ENCODE measurements at regions of chr5 and their contacts with region 1.

Region 1: DNA sequence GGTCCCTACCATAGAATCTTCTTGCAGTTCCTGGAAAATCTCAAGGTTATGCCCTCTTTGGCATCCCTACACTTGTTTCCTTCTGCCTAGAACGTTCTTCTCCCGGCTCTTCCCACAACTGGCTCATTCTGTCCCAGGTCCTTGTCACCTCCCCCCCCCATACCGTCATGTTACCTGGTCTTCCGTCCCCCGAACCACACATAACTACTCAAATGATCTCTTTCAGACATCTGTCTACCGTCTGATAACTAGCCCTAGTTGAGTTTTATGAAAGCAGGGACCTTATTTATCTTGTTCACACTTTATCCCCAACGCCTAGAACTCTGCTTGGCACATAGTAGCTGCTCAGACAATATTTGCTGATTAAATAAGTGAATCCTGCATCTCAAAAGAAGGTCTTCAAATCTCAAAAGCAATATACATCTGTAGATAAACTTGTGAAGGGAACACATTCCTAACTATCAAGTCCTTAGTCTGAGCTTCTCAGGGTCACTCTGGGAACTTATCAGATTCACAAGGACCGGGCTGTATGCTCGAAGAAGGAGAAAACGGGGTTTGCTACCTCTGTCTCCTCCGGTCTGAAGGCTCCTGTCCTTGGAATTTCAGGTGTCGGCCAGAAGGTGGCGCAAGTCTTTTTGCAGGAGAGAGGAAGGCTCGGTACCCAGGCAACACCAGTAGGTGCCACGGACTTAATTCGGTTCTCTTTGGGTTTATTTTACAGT is 30.0 kb downstream of the LCP2 start:
- DNase-seq: peak; percentile 52 to 93 (median 78)
- ATAC-seq: peak; percentile 59 to 76 (median 65)
- H3K4me3 ChIP-seq: no peak overlapping the region
- H3K4me3 Mint-ChIP-seq: peak overlapping the region; percentile 58 to 77 (median 62)
- H3K27ac ChIP-seq: peak overlapping the region; percentile 80
- H3K27ac Mint-ChIP-seq: peak overlapping the region; percentile 91 to 95
- H3K4me1 ChIP-seq: peaks cover 68 to 82% of the 10 kb centered on the region in 2 experiments
- H3K4me1 Mint-ChIP-seq: peaks cover 88 to 96% (median 95%) of the 10 kb centered on the region in 3 donors
- H3K27me3 ChIP-seq: no peaks in the 10 kb centered on the region
- H3K27me3 Mint-ChIP-seq: no peaks in the 10 kb centered on the region

Region 2: GRCh38 chr5:170070556-170071412 is 196.8 kb before region 1 on chr5:
- CTCF ChIA-PET with region 1: no interaction called
- POLR2A ChIA-PET with region 1: no interaction called
- DNase-seq: peak in 5 of 35 experiments; percentile 2 to 20 (median 7)
- ATAC-seq: no peak
- H3K4me3 ChIP-seq: no peak overlapping the region
- H3K4me3 Mint-ChIP-seq: no peak overlapping the region
- H3K27ac ChIP-seq: no peak overlapping the region
- H3K27ac Mint-ChIP-seq: no peak overlapping the region
- H3K4me1 ChIP-seq: no peaks in the 10 kb centered on the region
- H3K4me1 Mint-ChIP-seq: no peaks in the 10 kb centered on the region
- H3K27me3 ChIP-seq: no peaks in the 10 kb centered on the region
- H3K27me3 Mint-ChIP-seq: no peaks in the 10 kb centered on the region

Region 3: GRCh38 chr5:170169996-170170395 is 97.6 kb before region 1 on chr5:
- CTCF ChIA-PET with region 1: no interaction called
- POLR2A ChIA-PET with region 1: no interaction called
- DNase-seq: no peak
- ATAC-seq: no peak
- H3K4me3 ChIP-seq: no peak overlapping the region
- H3K4me3 Mint-ChIP-seq: no peak overlapping the region
- H3K27ac ChIP-seq: no peak overlapping the region
- H3K27ac Mint-ChIP-seq: no peak overlapping the region
- H3K4me1 ChIP-seq: no peaks in the 10 kb centered on the region
- H3K4me1 Mint-ChIP-seq: no peaks in the 10 kb centered on the region
- H3K27me3 ChIP-seq: peaks cover 0 to 21% of the 10 kb centered on the region in 2 experiments
- H3K27me3 Mint-ChIP-seq: peaks cover 2 to 9% of the 10 kb centered on the region in 2 donors

Region 4: GRCh38 chr5:170293273-170293672 is 25.7 kb after region 1 on chr5:
- CTCF ChIA-PET with region 1: interaction called, 7 to 111 read pairs
- POLR2A ChIA-PET with region 1: interaction called, 3 read pairs
- DNase-seq: peak in 28 of 35 experiments; percentile 29 to 74 (median 46)
- ATAC-seq: peak; percentile 16 to 40 (median 28)
- H3K4me3 ChIP-seq: peak overlapping the region; percentile 20 to 94
- H3K4me3 Mint-ChIP-seq: peak overlapping the region; percentile 99
- H3K27ac ChIP-seq: peak overlapping the region; percentile 88
- H3K27ac Mint-ChIP-seq: peak overlapping the region; percentile 99
- H3K4me1 ChIP-seq: peaks cover 58 to 66% of the 10 kb centered on the region in 2 experiments
- H3K4me1 Mint-ChIP-seq: peaks cover 75 to 94% (median 76%) of the 10 kb centered on the region in 3 donors
- H3K27me3 ChIP-seq: no peaks in the 10 kb centered on the region
- H3K27me3 Mint-ChIP-seq: no peaks in the 10 kb centered on the region

Measured in T-cell (primary cell).